ENCODE measurements at regions of chr12 and their contacts with region 1.

Region 1: DNA sequence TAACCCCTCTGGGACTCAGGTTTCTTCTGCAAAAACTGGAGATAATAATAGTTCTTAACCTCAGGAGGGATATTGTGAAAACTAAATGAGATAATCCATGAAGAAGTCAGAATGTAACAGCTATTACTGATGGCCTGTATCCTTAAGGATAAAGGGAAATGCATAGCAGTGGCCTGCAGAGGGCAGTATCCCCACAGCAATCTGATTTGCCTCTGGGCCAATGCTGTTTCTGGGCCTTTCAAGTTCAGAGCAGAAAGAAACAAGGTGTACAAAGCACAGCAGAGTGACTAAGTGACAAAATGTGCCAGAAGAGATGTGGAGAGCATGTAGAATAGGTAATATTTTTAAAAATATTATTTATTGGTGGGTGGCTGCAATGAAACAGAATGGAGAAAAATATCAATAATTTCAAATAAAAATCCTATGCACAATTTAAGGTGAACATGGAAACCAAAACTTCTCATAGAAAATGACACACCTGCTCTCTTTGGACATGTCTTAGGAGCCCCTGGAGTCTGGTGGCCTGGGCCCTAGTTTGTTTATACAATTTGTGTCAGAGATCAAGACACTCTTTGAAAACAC is 90.3 kb downstream of the C12orf75 start:
- DNase-seq: peak; percentile 71
- H3K4me3 ChIP-seq: no peak overlapping the region
- H3K27ac ChIP-seq: no peak overlapping the region
- H3K4me1 ChIP-seq: no peaks in the 10 kb centered on the region
- H3K27me3 ChIP-seq: no peaks in the 10 kb centered on the region
- CTCF ChIP-seq: peak; percentile 89

Region 2: DNA sequence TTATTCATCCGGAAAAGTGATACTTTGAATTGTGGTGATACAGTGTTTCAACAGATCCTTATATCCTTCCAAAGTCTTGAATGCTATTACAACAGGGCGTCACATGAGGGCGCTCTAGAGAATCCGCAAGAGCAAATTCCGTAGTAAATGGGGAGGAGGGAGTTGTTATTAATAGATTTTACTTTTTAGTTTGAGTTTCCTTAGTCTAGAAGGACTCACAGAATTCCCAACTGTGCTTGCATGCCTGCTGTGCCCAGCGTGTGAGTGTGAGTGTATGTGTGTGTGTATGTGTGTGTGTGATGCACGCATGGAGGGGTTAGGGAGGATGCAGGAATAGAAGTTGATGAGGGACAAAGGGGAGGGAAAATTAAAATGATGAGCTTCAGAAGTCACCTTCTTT is 285.0 kb after region 1 on chr12:
- CTCF ChIA-PET with region 1: no interaction called
- POLR2A ChIA-PET with region 1: interaction called, 5 read pairs
- intact Hi-C with region 1: loop called (anchors 10 kb)
- DNase-seq: peak; percentile 64
- H3K4me3 ChIP-seq: no peak overlapping the region
- H3K27ac ChIP-seq: no peak overlapping the region
- H3K4me1 ChIP-seq: no peaks in the 10 kb centered on the region
- H3K27me3 ChIP-seq: no peaks in the 10 kb centered on the region
- CTCF ChIP-seq: peak; percentile 92

Region 3: DNA sequence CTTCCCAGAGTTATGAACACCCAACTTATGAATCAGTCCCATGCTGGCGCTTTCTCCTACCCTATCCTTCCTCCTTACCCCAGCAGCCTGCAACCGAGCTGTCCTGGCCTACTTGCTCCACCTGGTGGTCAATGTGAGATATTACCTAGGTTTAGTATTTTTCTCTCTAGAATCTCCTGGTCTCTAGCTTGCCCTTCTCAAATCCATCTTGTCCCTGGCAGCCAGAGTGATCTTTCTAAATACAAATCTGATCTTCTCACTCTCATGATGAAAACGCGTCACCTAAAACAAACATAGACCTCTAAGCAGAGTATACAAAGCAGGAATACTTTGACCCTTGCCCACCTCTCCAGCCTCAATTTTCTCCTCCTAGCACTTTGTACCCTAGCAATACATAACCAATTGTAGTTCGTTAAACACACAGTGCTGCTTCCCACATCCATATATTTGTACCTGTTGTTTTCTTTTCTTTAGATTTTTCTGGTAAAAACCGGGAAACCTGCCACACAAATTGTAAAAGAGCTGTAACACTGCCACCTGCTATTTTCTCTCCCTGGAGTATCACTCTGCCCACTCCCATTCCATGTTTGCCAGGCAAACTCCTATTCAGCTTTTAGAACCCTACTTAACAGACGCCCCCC is 861.8 kb after region 1 on chr12:
- CTCF ChIA-PET with region 1: interaction called, 3 read pairs
- POLR2A ChIA-PET with region 1: no interaction called
- intact Hi-C with region 1: loop called (anchors 5 kb)
- DNase-seq: peak; percentile 58
- H3K4me3 ChIP-seq: no peak overlapping the region
- H3K27ac ChIP-seq: no peak overlapping the region
- H3K4me1 ChIP-seq: no peaks in the 10 kb centered on the region
- H3K27me3 ChIP-seq: no peaks in the 10 kb centered on the region
- CTCF ChIP-seq: peak; percentile 71

Measured in A673 (cell line).